ENCODE measurements at regions of chr12 and their contacts with region 1.

Region 1: DNA sequence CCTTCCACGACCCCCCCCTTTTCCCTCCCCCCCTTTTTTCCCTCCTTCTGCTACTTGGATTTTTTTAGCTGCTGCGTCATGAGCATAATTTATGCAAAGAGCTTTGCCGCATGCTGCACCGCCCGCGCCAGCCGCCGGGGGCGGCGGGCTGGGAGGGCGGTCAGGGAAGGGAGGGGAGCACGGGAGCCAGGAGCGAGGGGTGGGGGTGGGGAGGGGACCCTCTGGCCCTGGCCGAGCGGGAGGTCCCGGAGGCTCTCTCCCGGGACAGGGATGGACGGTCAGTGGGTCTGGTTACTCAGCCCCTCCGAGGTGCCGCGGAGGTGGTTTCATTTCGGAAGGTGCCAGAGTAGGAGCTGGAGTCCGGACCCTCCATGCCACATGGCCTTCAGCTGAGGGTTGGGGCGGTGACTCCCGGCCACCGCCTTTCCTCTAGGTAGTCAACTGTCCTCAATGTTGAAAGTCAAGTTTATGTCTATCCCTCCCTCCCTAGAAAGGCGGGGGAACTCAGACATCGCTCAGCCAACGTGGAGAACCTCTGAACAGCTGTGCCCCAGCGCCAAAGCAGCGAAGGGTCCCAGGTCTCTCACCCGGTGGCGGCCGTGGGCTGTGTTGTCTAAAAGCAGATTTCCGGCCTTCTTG is at the start of gene POU6F1:
- DNase-seq: peak; percentile 57
- ATAC-seq: peak; percentile 86
- H3K4me3 ChIP-seq: peak within 1 kb of the TSS; percentile 71 to 79 (median 73)
- H3K27ac ChIP-seq: peak within 1 kb of the TSS; percentile 44
- H3K4me1 ChIP-seq: peaks cover 16% of the 10 kb centered on the region
- H3K27me3 ChIP-seq: no peaks in the 10 kb centered on the region; a peak in 1 of 5 replicates
- CTCF ChIP-seq: no peak; the same call in 1 of the 2 replicates
- EP300 ChIP-seq: no peak
- POLR2A ChIP-seq: 0 out of 4 replicates have a peak, but pooled peaks of 1 of the 2 experiments have one; percentile 36
- RAD21 ChIP-seq: no peak
- total RNA-seq, gene POU6F1: 0.41 and 0.51 TPM in 2 replicates

Region 2: DNA sequence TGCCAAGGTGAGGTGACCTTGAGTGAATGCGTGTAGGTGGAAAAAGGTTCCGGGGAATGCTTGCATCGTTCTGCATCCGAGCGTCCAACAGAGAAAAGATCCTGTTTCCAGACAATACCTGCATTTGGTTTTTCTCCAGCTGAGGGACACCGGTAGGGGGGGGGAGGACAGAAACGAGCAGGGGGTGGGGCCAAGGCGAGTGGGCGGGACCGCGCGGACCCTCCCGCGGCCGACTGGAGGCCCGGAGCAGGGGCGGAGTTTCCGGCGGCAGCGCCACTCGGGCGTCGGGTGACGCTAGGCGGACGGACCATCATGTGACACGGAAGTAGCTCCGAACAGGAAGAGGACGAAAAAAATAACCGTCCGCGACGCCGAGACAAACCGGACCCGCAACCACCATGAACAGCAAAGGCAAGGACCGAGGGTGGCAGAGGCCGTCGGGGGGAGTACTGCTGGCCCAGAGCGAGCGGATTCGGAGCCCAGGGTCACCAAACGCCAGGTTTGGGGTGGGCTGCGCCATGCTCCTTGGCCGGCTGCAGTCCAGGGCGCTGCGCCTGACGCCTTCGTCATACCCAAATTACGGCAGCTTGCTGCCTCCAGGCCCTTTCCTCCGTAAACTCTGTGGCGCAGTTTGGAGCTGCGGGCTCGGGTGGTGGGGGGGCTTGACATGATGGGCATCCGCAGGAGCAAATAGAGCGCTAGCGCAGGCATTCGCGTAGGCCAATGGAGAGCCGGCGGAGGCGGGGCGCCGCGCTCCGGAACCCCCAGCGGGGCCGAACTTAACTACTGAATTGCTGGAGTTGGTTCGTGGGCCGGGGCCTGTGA is 20.6 kb after region 1 on chr12 and contains the start of gene DAZAP2:
- CTCF ChIA-PET with region 1: no interaction called
- POLR2A ChIA-PET with region 1: interaction called, 43 read pairs
- in situ Hi-C with region 1: no loop called
- intact Hi-C with region 1: no loop called
- DNase-seq: peak; percentile 88
- ATAC-seq: peak; percentile 97
- H3K4me3 ChIP-seq: peak within 1 kb of the TSS; percentile 99 to 100 (median 100)
- H3K27ac ChIP-seq: peak within 1 kb of the TSS; percentile 100
- H3K4me1 ChIP-seq: peaks cover 18% of the 10 kb centered on the region
- H3K27me3 ChIP-seq: no peaks in the 10 kb centered on the region; a peak in 1 of 5 replicates
- CTCF ChIP-seq: no peak
- EP300 ChIP-seq: no peak
- POLR2A ChIP-seq: peak; percentile 59 to 86
- RAD21 ChIP-seq: peak; percentile 37; the same call in 1 of the 2 replicates
- total RNA-seq, gene DAZAP2: 64.5 and 84.2 TPM in 2 replicates